ENCODE measurements at regions of chr2 and their contacts with region 1.

Region 1: GRCh38 chr2:101361121-101361870 is 26.0 kb downstream of the CREG2 start:
- DNase-seq: peak; percentile 70
- H3K4me3 Mint-ChIP-seq: peak overlapping the region; percentile 19
- H3K27ac Mint-ChIP-seq: peak overlapping the region; percentile 88
- H3K4me1 Mint-ChIP-seq: peaks cover 48% of the 10 kb centered on the region
- H3K27me3 Mint-ChIP-seq: peaks cover 11% of the 10 kb centered on the region

Region 2: DNA sequence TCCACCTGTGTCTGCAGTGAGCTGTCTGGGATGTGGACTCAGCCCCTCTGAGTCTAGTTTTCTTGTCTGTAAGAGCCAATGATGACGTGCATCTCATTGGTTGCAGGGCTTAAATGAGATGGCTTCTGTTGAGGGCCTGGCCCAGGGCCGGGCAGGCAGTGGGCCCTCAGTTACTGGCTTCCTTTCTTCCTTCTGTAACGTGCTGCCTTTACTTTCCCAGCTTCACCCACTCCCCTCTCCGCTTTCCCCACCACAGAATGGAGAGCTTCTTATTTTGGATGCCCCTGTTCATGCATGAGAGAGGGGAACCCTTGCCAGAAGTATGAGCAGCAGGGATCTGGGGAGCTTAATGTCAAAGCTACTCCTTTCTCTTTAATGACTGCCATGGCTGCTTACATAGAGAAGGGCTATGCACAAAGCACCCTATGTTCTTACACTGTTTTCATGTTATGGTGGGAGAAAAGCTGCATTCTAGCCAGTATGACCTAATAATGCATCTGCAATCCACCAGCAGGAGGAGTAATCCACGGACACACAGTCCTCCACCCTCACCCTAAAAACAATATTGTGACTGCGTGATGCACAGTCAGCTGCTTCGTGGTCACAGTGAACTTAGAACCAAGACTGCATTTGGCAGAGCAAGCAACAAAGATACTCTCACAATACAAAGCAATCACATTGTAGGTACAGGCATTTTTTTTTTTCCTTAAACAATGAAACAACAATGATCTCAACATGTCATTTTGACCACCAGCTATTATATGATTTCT is 11.2 kb before region 1 on chr2:
- CTCF ChIA-PET with region 1: interaction called, 16 read pairs
- DNase-seq: peak; percentile 52
- H3K4me3 Mint-ChIP-seq: no peak overlapping the region
- H3K27ac Mint-ChIP-seq: no peak overlapping the region
- H3K4me1 Mint-ChIP-seq: peaks cover 14% of the 10 kb centered on the region
- H3K27me3 Mint-ChIP-seq: peaks cover 24% of the 10 kb centered on the region

Measured in activated naive CD4-positive, alpha-beta T cell treated with anti-CD3 and anti-CD28 coated beads, Interleukin-2, amount 10 ng/mL, durations not matched to agents 7 days and 5 days (primary cell).